PC-9 (cell line): ENCODE measurements at regions of chr4 and their contacts with region 1.

Region 1: GRCh38 chr4:169270810-169271691 is at the start of gene SH3RF1:
- DNase-seq: peak; percentile 60 to 91
- H3K4me3 ChIP-seq: peak within 1 kb of the TSS; percentile 91
- H3K27ac ChIP-seq: peak within 1 kb of the TSS; percentile 66
- H3K4me1 ChIP-seq: peaks cover 39% of the 10 kb centered on the region
- H3K27me3 ChIP-seq: no peaks in the 10 kb centered on the region
- CTCF ChIP-seq: no peak; the same call in 1 of the 2 replicates
- total RNA-seq, gene SH3RF1: 26.4 and 37.4 TPM in 2 replicates

Region 2: GRCh38 chr4:169069972-169070902 is 200.8 kb before region 1 on chr4:
- CTCF ChIA-PET with region 1: no interaction called
- POLR2A ChIA-PET with region 1: interaction called, 5 read pairs
- intact Hi-C with region 1: loop called (anchors 1 kb)
- DNase-seq: peak; percentile 88 to 99
- H3K4me3 ChIP-seq: peak overlapping the region; percentile 53; the same call in 1 of the 2 replicates
- H3K27ac ChIP-seq: peak overlapping the region; percentile 97
- H3K4me1 ChIP-seq: peaks cover 47% of the 10 kb centered on the region
- H3K27me3 ChIP-seq: no peaks in the 10 kb centered on the region
- CTCF ChIP-seq: no peak

Region 3: DNA sequence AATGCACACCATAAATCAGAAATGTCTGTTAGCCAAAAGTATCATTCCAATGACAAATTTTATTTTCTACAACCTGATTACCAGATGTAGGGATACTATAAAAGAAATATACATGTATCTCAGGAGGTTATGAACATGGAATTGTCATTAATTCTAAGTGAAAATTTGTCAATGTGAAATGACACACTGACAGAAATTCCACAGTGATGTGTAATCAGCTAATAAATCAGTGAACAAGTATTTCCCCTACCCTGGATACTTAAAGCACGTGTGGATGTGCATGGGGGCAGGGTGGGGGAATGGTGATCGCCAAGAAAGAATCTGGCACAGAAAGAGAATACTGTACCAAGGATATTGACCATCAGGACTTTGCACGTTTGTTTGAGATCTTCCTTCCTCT is 123.9 kb before region 1 on chr4:
- CTCF ChIA-PET with region 1: no interaction called
- POLR2A ChIA-PET with region 1: no interaction called
- intact Hi-C with region 1: loop called (anchors 5 kb)
- DNase-seq: peak; percentile 15 to 65
- H3K4me3 ChIP-seq: no peak overlapping the region
- H3K27ac ChIP-seq: 0 out of 2 replicates have a peak overlapping the region, but pooled peaks have one; percentile 8
- H3K4me1 ChIP-seq: peaks cover 18% of the 10 kb centered on the region
- H3K27me3 ChIP-seq: no peaks in the 10 kb centered on the region
- CTCF ChIP-seq: no peak

Region 4: GRCh38 chr4:169252339-169253112 is 18.5 kb before region 1 on chr4:
- CTCF ChIA-PET with region 1: interaction called, 3 read pairs
- POLR2A ChIA-PET with region 1: interaction called, 10 read pairs
- intact Hi-C with region 1: loop called (anchors 1 kb)
- DNase-seq: no peak
- H3K4me3 ChIP-seq: no peak overlapping the region
- H3K27ac ChIP-seq: peak overlapping the region; percentile 81
- H3K4me1 ChIP-seq: peaks cover 54% of the 10 kb centered on the region
- H3K27me3 ChIP-seq: no peaks in the 10 kb centered on the region
- CTCF ChIP-seq: no peak

Region 5: DNA sequence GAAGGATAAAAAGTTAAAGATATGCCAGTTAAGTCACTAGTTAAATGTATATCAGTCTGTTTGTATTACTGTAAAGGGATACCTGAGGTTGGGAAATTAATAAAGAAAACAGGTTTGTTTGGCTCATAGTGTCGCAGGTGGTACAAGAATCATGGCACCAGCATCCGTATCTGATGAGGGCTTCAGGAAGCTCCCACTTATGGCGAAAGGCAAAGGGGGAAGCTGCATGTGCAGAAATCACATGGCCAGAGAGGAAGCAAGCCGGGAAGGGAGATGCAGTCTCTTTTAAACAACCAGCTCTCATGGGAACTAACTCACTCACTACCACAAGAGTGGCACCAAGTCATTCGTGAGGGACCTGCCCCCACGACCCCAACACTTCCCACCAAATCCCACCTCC is 91.6 kb after region 1 on chr4:
- CTCF ChIA-PET with region 1: no interaction called
- POLR2A ChIA-PET with region 1: no interaction called
- intact Hi-C with region 1: loop called (anchors 5 kb)
- DNase-seq: no peak
- H3K4me3 ChIP-seq: no peak overlapping the region
- H3K27ac ChIP-seq: peak overlapping the region; percentile 57; the same call in 1 of the 2 replicates
- H3K4me1 ChIP-seq: no peaks in the 10 kb centered on the region
- H3K27me3 ChIP-seq: no peaks in the 10 kb centered on the region
- CTCF ChIP-seq: no peak

Region 6: GRCh38 chr4:169510617-169511016 is 239.6 kb after region 1 on chr4:
- CTCF ChIA-PET with region 1: no interaction called
- POLR2A ChIA-PET with region 1: no interaction called
- intact Hi-C with region 1: no loop called
- DNase-seq: no peak
- H3K4me3 ChIP-seq: no peak overlapping the region
- H3K27ac ChIP-seq: no peak overlapping the region
- H3K4me1 ChIP-seq: no peaks in the 10 kb centered on the region
- H3K27me3 ChIP-seq: no peaks in the 10 kb centered on the region
- CTCF ChIP-seq: no peak